Left cardiac atrium (tissue), 4 donors: ENCODE measurements at regions of chr12 and their contacts with region 1.

Region 1: GRCh38 chr12:67025543-67026114 is 243.5 kb upstream of the CAND1 start:
- DNase-seq: no peak
- ATAC-seq: peak in 1 of 2 donors; percentile 56

Region 2: GRCh38 chr12:67068761-67069450 is 43.3 kb after region 1 on chr12:
- intact Hi-C with region 1: loop called in 1 of 2 experiments (anchors 5 kb)
- DNase-seq: peak; percentile 37
- ATAC-seq: peak; percentile 49 to 72